PC-3 (cell line): ENCODE measurements at regions of chr17 and their contacts with region 1.

Region 1: GRCh38 chr17:50478391-50479381 is at the start of gene RSAD1:
- DNase-seq: peak; percentile 96
- ATAC-seq: peak; percentile 85
- H3K4me3 ChIP-seq: peak within 1 kb of the TSS; percentile 76
- H3K27ac ChIP-seq: peak within 1 kb of the TSS; percentile 38
- H3K4me1 ChIP-seq: peaks cover 24% of the 10 kb centered on the region
- H3K27me3 ChIP-seq: no peaks in the 10 kb centered on the region
- CTCF ChIP-seq: peak; percentile 90
- total RNA-seq, gene RSAD1: 37.7 and 46.7 TPM in 2 replicates

Region 2: GRCh38 chr17:50361561-50362480 is 116.9 kb before region 1 on chr17:
- CTCF ChIA-PET with region 1: interaction called, 28 read pairs
- POLR2A ChIA-PET with region 1: no interaction called
- intact Hi-C with region 1: loop called (anchors 1 kb)
- DNase-seq: peak; percentile 79
- ATAC-seq: peak; percentile 75
- H3K4me3 ChIP-seq: no peak overlapping the region
- H3K27ac ChIP-seq: no peak overlapping the region
- H3K4me1 ChIP-seq: no peaks in the 10 kb centered on the region
- H3K27me3 ChIP-seq: no peaks in the 10 kb centered on the region
- CTCF ChIP-seq: peak; percentile 92

Region 3: GRCh38 chr17:50501054-50501453 is 22.4 kb after region 1 on chr17:
- CTCF ChIA-PET with region 1: interaction called, 12 read pairs
- POLR2A ChIA-PET with region 1: no interaction called
- intact Hi-C with region 1: loop called (anchors 1 kb)
- DNase-seq: peak; percentile 76
- ATAC-seq: no peak
- H3K4me3 ChIP-seq: no peak overlapping the region
- H3K27ac ChIP-seq: no peak overlapping the region
- H3K4me1 ChIP-seq: peaks cover 8% of the 10 kb centered on the region
- H3K27me3 ChIP-seq: no peaks in the 10 kb centered on the region
- CTCF ChIP-seq: peak; percentile 60

Region 4: DNA sequence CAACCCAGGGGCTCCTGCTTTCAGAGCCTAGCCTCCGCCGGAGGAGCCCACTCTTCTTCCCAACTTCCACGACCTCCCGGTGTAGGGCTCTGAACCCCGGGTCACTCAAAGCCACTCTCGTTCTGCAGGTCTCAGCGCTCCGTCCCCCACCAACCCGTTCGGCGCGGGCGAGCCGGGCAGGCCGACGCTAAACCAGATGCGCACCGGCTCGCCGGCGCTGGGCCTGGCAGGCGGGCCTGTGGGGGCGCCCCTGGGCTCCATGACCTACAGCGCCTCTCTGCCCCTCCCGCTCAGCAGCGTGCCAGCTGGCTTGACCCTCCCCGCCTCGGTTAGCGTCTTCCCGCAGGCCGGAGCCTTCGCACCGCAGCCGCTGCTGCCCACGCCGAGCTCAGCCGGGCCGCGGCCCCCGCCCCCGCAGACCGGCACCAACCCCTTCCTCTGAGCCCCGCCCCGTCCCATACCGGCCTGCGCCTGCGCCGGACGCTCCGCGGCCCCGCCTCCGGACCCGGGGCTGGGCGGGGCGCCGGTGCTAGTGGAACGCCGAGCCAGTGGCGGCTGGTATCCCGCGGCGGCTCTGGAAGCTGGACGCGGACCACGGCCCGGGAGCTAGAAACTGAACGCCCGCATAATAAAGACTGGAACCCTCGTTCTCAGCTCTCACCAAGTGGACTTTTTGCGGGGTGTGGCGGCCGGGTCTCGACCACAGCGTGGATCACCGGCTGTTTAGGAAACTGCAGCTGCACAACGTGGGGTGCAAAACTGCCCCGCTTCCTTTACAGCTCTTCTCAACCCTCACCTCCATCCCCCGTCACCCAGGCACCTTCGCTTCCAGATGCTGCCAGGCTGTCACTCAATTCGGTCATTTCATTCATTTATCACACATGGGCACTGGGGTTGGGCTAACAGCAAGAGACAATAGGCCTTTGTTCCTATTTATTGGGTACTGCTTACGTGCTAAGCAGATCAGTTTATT is 63.3 kb after region 1 on chr17:
- CTCF ChIA-PET with region 1: interaction called, 7 read pairs
- POLR2A ChIA-PET with region 1: no interaction called
- intact Hi-C with region 1: loop called (anchors 1 kb)
- DNase-seq: peak; percentile 92
- ATAC-seq: peak; percentile 70
- H3K4me3 ChIP-seq: peak overlapping the region; percentile 71
- H3K27ac ChIP-seq: peak overlapping the region; percentile 84
- H3K4me1 ChIP-seq: peaks cover 25% of the 10 kb centered on the region
- H3K27me3 ChIP-seq: no peaks in the 10 kb centered on the region
- CTCF ChIP-seq: peak; percentile 34; the same call in 1 of the 2 replicates

Region 5: DNA sequence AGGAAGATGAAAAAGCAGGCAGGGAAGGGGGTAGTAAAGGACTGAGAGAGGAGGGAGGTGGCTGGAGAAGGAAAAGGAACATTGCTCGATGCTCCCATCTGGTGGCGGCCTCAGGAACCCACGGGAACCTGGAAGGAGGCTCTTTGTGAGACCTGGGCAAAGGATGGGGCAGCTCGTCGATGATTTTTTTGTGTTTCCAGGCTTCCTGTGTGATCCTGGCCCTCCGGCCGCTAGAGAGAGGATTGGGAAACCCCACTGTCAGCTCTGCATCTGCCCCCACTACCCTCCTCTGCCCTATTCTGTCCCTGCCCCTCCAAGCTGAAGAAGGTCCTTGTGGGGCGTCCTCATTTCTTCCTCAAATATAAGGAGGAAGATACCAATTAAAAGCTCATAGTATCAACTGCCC is 363.3 kb after region 1 on chr17:
- CTCF ChIA-PET with region 1: interaction called, 7 read pairs
- POLR2A ChIA-PET with region 1: no interaction called
- intact Hi-C with region 1: loop called (anchors 5 kb)
- DNase-seq: peak; percentile 88
- ATAC-seq: peak; percentile 92
- H3K4me3 ChIP-seq: no peak overlapping the region
- H3K27ac ChIP-seq: no peak overlapping the region
- H3K4me1 ChIP-seq: peaks cover 15% of the 10 kb centered on the region; the same call in 1 of the 2 replicates
- H3K27me3 ChIP-seq: no peaks in the 10 kb centered on the region
- CTCF ChIP-seq: peak; percentile 92